Activated CD4-positive, alpha-beta memory T cell treated with anti-CD3 and anti-CD28 coated beads for 36 hours (primary cell): ENCODE measurements at regions of chr2 and their contacts with region 1.

Region 1: GRCh38 chr2:207529330-207530159 is at the start of gene CREB1:
- DNase-seq: peak; percentile 100
- H3K4me3 Mint-ChIP-seq: peak within 1 kb of the TSS; percentile 89
- H3K27ac Mint-ChIP-seq: peak within 1 kb of the TSS; percentile 99
- H3K4me1 Mint-ChIP-seq: peaks cover 50% of the 10 kb centered on the region
- H3K27me3 Mint-ChIP-seq: no peaks in the 10 kb centered on the region
- total RNA-seq, gene CREB1: 90.7 to 92.2 TPM

Region 2: DNA sequence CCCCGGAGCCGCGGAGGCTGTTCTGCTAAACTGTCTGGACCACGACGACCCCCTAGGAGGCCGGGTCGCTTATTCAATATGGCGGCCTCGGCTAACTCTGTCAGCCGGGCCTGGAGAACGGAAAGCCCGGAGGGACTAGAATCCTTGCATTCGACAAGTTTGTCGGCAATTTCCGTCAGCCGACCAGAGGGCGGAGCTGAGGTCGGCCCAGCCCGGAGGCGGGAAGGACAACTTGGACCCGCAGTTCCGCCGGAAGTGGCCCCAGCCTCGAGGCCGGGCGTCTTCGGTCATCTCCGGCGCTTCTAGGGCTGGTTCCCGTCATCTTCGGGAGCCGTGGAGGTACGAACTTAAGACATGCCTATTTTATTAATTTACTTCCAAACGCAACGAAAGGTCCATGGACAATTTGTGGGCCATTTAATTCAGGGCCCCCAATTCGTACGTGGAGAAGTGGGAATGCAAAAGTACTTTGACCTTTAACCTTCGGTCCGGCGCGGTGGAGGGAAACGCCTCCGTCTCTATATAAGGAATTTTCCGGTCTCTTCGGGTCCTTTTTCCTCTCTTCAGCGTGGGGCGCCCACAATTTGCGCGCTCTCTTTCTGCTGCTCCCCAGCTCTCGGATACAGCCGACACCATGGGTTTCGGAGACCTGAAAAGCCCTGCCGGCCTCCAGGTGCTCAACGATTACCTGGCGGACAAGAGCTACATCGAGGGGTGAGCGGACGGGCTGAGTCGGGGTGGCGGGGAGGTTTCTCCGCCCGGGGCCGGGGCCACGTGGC is 1370.0 kb before region 1 on chr2 and contains the starts of genes EEF1B2 and NDUFS1:
- CTCF ChIA-PET with region 1: no interaction called
- POLR2A ChIA-PET with region 1: no interaction called
- intact Hi-C with region 1: loop called (anchors 5 kb)
- DNase-seq: peak; percentile 98
- H3K4me3 Mint-ChIP-seq: peak within 1 kb of the TSS; percentile 96
- H3K27ac Mint-ChIP-seq: peak within 1 kb of the TSS; percentile 97
- H3K4me1 Mint-ChIP-seq: peaks cover 52% of the 10 kb centered on the region
- H3K27me3 Mint-ChIP-seq: no peaks in the 10 kb centered on the region
- total RNA-seq, gene EEF1B2: 1,180 to 1,194 TPM
- total RNA-seq, gene NDUFS1: 79.2 to 80.8 TPM

Region 3: GRCh38 chr2:207156451-207157161 is 372.9 kb before region 1 on chr2:
- CTCF ChIA-PET with region 1: no interaction called
- POLR2A ChIA-PET with region 1: no interaction called
- intact Hi-C with region 1: loop called (anchors 2 kb)
- DNase-seq: peak; percentile 66
- H3K4me3 Mint-ChIP-seq: no peak overlapping the region
- H3K27ac Mint-ChIP-seq: peak overlapping the region; percentile 46
- H3K4me1 Mint-ChIP-seq: peaks cover 89% of the 10 kb centered on the region
- H3K27me3 Mint-ChIP-seq: no peaks in the 10 kb centered on the region

Region 4: GRCh38 chr2:207513551-207514257 is 15.8 kb before region 1 on chr2:
- CTCF ChIA-PET with region 1: interaction called, 7 read pairs
- POLR2A ChIA-PET with region 1: interaction called, 17 read pairs
- intact Hi-C with region 1: loop called (anchors 2 kb)
- DNase-seq: no peak
- H3K4me3 Mint-ChIP-seq: no peak overlapping the region
- H3K27ac Mint-ChIP-seq: peak overlapping the region; percentile 4
- H3K4me1 Mint-ChIP-seq: peaks cover 32% of the 10 kb centered on the region
- H3K27me3 Mint-ChIP-seq: no peaks in the 10 kb centered on the region

Region 5: GRCh38 chr2:207710814-207711740 is 181.5 kb after region 1 on chr2 and contains the start of gene CCNYL1:
- CTCF ChIA-PET with region 1: no interaction called
- POLR2A ChIA-PET with region 1: interaction called, 7 read pairs
- intact Hi-C with region 1: loop called (anchors 1 kb)
- DNase-seq: peak; percentile 99
- H3K4me3 Mint-ChIP-seq: peak within 1 kb of the TSS; percentile 88
- H3K27ac Mint-ChIP-seq: peak within 1 kb of the TSS; percentile 82
- H3K4me1 Mint-ChIP-seq: peaks cover 25% of the 10 kb centered on the region
- H3K27me3 Mint-ChIP-seq: no peaks in the 10 kb centered on the region
- total RNA-seq, gene CCNYL1: 5.7 to 6.4 TPM